ENCODE measurements at regions of chr5 and their contacts with region 1.

Region 1: GRCh38 chr5:77775790-77776553 is at the start of gene TBCA:
- DNase-seq: peak; percentile 96
- H3K4me3 ChIP-seq: peak within 1 kb of the TSS; percentile 63 to 93 (median 91)
- H3K27ac ChIP-seq: peak within 1 kb of the TSS; percentile 93
- H3K4me1 ChIP-seq: peaks cover 26% of the 10 kb centered on the region
- H3K27me3 ChIP-seq: peaks cover 0 to under 1% of the 10 kb centered on the region in 2 experiments
- CTCF ChIP-seq: peak; percentile 7 to 25
- POLR2A ChIP-seq: peak; percentile 77
- total RNA-seq, gene TBCA: 193 and 206 TPM in 2 replicates

Region 2: GRCh38 chr5:77491783-77492652 is 284.0 kb before region 1 on chr5 and contains the start of gene WDR41:
- CTCF ChIA-PET with region 1: no interaction called
- POLR2A ChIA-PET with region 1: no interaction called
- dilution Hi-C with region 1: no loop called
- intact Hi-C with region 1: loop called (anchors 5 kb)
- DNase-seq: peak; percentile 96
- H3K4me3 ChIP-seq: peak within 1 kb of the TSS; percentile 89 to 94 (median 90)
- H3K27ac ChIP-seq: peak within 1 kb of the TSS; percentile 79
- H3K4me1 ChIP-seq: peaks cover 9% of the 10 kb centered on the region
- H3K27me3 ChIP-seq: peaks cover 12 to 25% of the 10 kb centered on the region in 2 experiments
- CTCF ChIP-seq: peak; percentile 93 to 94
- POLR2A ChIP-seq: peak; percentile 54
- total RNA-seq, gene WDR41: 23.9 and 33.6 TPM in 2 replicates

Region 3: DNA sequence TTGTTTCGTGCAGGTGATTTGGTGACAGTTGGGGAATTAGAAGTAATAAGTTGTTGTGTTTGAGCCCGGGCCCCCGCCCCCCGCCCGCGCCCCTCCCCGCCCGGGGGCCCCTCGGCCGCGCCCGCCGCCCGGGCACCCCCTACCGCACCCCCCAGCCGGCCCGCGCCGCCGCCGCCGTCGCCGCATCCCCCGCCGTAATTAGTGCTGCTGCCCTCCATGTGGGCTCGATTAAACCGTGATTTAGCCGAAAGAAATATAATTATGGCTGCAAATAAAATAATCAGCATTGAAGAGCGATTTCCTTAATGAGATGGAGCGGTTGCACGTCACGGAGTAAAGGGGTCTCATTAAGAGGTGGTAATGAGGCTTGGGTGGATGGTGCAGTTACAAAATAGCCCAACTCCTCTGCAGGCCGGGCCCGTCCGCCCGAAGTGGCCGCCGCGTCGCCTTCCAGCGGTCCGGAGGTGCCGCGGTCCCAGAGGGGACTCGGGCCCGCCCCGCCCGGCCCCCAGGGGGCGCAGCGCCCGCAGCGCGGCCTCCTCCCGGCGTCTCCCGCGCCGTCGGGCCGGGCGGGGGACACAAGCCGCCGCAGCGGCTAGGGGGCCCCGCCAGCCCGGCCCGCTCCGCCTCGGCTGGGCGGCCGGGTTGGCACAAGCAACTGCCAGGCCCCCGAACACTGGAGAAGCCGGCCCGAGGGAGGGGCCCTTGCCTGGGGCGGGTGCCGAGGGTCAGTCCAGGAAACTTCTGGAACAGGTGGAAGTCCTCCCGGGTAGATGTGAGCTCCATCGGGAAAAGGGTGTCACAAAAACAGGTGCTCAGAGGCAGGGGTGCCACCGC is 130.6 kb before region 1 on chr5:
- CTCF ChIA-PET with region 1: no interaction called
- POLR2A ChIA-PET with region 1: no interaction called
- dilution Hi-C with region 1: no loop called
- intact Hi-C with region 1: loop called (anchors 2 kb)
- DNase-seq: no peak
- H3K4me3 ChIP-seq: no peak overlapping the region
- H3K27ac ChIP-seq: no peak overlapping the region
- H3K4me1 ChIP-seq: peaks cover 5% of the 10 kb centered on the region
- H3K27me3 ChIP-seq: peaks cover 69 to 94% of the 10 kb centered on the region in 2 experiments
- CTCF ChIP-seq: peak; percentile 51 to 63
- POLR2A ChIP-seq: no peak

Region 4: DNA sequence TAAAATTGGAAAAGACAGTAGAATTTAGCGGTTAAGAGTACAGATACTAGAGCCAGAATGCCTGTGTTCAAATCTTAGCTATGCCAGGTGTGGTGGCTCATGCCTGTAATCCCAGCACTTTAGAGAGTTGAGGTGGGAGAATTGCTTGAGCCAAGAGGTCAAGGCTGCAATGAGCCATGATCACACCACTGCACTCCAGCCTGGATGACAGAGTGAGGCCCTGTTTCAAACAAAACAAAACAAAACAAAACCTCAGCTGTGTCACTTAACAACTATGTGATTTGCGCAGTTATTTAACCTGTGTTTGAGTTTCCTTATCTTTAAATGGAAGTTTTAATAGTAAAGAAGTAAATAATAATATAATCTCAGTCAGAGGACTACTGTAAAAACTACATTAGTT is 68.2 kb before region 1 on chr5:
- CTCF ChIA-PET with region 1: no interaction called
- POLR2A ChIA-PET with region 1: no interaction called
- dilution Hi-C with region 1: no loop called
- intact Hi-C with region 1: loop called (anchors 5 kb)
- DNase-seq: no peak
- H3K4me3 ChIP-seq: no peak overlapping the region
- H3K27ac ChIP-seq: no peak overlapping the region
- H3K4me1 ChIP-seq: no peaks in the 10 kb centered on the region
- H3K27me3 ChIP-seq: no peaks in the 10 kb centered on the region
- CTCF ChIP-seq: no peak
- POLR2A ChIP-seq: no peak

Region 5: GRCh38 chr5:77852514-77853352 is 76.8 kb after region 1 on chr5:
- CTCF ChIA-PET with region 1: no interaction called
- POLR2A ChIA-PET with region 1: no interaction called
- dilution Hi-C with region 1: no loop called
- intact Hi-C with region 1: loop called (anchors 5 kb)
- DNase-seq: peak; percentile 23
- H3K4me3 ChIP-seq: peak overlapping the region; percentile 28 to 62 (median 44)
- H3K27ac ChIP-seq: no peak overlapping the region
- H3K4me1 ChIP-seq: peaks cover 6% of the 10 kb centered on the region
- H3K27me3 ChIP-seq: peaks cover 46% of the 10 kb centered on the region in 2 experiments
- CTCF ChIP-seq: no peak
- POLR2A ChIP-seq: no peak

Region 6: GRCh38 chr5:78008356-78008967 is 232.5 kb after region 1 on chr5:
- CTCF ChIA-PET with region 1: no interaction called
- POLR2A ChIA-PET with region 1: no interaction called
- dilution Hi-C with region 1: no loop called
- intact Hi-C with region 1: loop called (anchors 5 kb)
- DNase-seq: peak; percentile 53
- H3K4me3 ChIP-seq: no peak overlapping the region
- H3K27ac ChIP-seq: no peak overlapping the region
- H3K4me1 ChIP-seq: no peaks in the 10 kb centered on the region
- H3K27me3 ChIP-seq: no peaks in the 10 kb centered on the region
- CTCF ChIP-seq: peak; percentile 61 to 62
- POLR2A ChIP-seq: no peak

Region 7: GRCh38 chr5:78162253-78162862 is 386.4 kb after region 1 on chr5:
- CTCF ChIA-PET with region 1: no interaction called
- POLR2A ChIA-PET with region 1: no interaction called
- dilution Hi-C with region 1: no loop called
- intact Hi-C with region 1: loop called (anchors 10 kb)
- DNase-seq: peak; percentile 56
- H3K4me3 ChIP-seq: no peak overlapping the region
- H3K27ac ChIP-seq: no peak overlapping the region
- H3K4me1 ChIP-seq: no peaks in the 10 kb centered on the region
- H3K27me3 ChIP-seq: no peaks in the 10 kb centered on the region
- CTCF ChIP-seq: peak; percentile 45 to 47
- POLR2A ChIP-seq: no peak

Measured in endothelial cell of umbilical vein (primary cell).